ENCODE measurements at regions of chr20 and their contacts with region 1.

Region 1: GRCh38 chr20:38221119-38221589 is 39.4 kb downstream of the KIAA1755 start:
- DNase-seq: peak; percentile 70
- ATAC-seq: peak; percentile 87
- H3K4me3 ChIP-seq: no peak overlapping the region
- H3K27ac ChIP-seq: no peak overlapping the region
- H3K4me1 ChIP-seq: peaks cover 18% of the 10 kb centered on the region; the same call in 1 of the 2 replicates
- H3K27me3 ChIP-seq: peaks cover 5 to 46% of the 10 kb centered on the region in 2 experiments; a peak in 4 of 5 replicates
- CTCF ChIP-seq: peak; percentile 100
- EP300 ChIP-seq: no peak
- POLR2A ChIP-seq: no peak
- RAD21 ChIP-seq: peak; percentile 98

Region 2: GRCh38 chr20:37941332-37941731 is 279.8 kb before region 1 on chr20:
- CTCF ChIA-PET with region 1: interaction called, 4 read pairs
- POLR2A ChIA-PET with region 1: no interaction called
- in situ Hi-C with region 1: no loop called
- intact Hi-C with region 1: loop called (anchors 5 kb)
- DNase-seq: peak; percentile 69
- ATAC-seq: peak; percentile 87
- H3K4me3 ChIP-seq: no peak overlapping the region
- H3K27ac ChIP-seq: no peak overlapping the region
- H3K4me1 ChIP-seq: peaks cover 16% of the 10 kb centered on the region
- H3K27me3 ChIP-seq: peaks cover 8 to 9% of the 10 kb centered on the region in 2 experiments; a peak in 3 of 5 replicates
- CTCF ChIP-seq: peak; percentile 81
- EP300 ChIP-seq: no peak
- POLR2A ChIP-seq: no peak
- RAD21 ChIP-seq: peak; percentile 84

Region 3: DNA sequence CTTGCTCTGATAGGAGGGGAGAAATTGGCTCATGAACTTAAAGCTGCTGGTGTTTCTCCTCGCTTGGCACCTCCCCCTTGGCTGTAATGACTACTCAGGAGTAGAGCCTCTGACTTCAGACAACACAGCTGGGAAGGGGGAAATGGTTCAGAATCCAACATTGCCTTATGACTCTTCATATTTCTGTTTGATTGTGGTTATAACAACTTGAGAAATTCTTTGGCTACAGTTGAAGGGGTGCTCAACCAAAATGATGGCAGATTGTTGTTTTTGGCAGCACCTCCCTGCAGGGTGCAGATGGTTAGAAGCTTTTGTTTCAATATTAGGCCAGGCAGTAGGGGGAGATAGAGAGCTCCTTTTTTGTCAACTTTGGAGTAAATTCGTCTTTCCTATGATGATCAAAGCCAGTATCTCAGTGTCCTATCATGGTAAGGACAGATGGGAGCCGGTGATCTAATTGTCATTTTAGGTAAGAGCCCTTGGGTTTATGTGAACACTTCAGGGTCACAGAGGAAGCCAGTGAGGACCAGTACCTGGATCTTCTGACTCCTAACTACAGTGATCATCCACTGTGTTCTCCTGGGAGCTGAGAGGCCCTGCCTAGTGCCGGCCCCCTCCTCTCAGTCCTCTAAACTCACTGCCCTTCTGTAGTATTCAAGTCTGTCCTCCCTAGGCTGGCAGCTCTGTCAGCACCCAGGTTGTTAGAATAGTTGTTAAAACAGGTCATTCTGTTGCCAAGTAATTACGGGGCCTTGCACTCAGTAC is 147.7 kb before region 1 on chr20:
- CTCF ChIA-PET with region 1: interaction called, 76 read pairs
- POLR2A ChIA-PET with region 1: interaction called, 7 read pairs
- in situ Hi-C with region 1: no loop called
- intact Hi-C with region 1: loop called (anchors 1 kb)
- DNase-seq: peak; percentile 76
- ATAC-seq: peak; percentile 82
- H3K4me3 ChIP-seq: no peak overlapping the region
- H3K27ac ChIP-seq: no peak overlapping the region
- H3K4me1 ChIP-seq: peaks cover 37% of the 10 kb centered on the region
- H3K27me3 ChIP-seq: no peaks in the 10 kb centered on the region
- CTCF ChIP-seq: peak; percentile 84
- EP300 ChIP-seq: no peak
- POLR2A ChIP-seq: no peak
- RAD21 ChIP-seq: peak; percentile 79

Region 4: DNA sequence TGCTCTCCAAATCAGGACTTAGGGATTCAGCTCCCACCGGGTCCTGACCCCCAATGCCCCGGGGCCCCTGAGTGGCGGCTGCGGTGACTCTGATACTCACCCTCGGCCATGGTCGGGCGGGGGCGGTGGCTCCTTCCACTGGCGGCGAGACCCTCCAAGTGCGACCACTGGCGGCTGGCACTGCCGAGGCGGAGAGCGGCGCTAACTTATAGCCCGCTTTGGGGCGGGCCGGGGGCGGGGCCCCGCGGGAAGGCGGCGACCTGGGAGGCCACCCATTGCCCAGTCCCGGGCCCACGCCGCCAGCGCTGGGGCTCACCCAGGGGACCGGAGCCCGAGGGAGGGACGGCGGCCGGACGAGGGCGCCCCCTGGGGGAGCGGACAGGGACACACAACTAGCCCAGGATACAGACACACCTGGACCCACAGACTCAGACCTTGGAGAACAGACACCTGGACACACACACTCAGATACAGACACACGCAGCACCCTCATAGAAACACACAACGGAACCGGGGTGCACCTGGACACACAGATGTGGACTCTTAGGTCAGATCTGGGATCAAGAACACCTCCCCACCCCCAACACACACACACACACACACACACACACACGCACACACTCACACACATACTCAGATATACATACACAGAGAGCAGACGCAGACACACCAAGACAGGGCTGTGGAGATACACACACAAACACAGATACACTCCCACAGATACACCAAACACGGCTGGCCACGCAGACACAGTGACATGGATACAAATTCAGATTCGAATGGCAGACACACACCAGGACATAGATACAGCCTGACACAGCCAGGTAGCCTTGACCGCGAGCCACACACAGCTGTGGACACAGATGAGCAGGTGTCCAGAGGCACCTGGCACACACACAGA is 55.8 kb before region 1 on chr20 and contains the start of gene TGM2:
- CTCF ChIA-PET with region 1: interaction called, 6 read pairs
- POLR2A ChIA-PET with region 1: no interaction called
- in situ Hi-C with region 1: no loop called
- intact Hi-C with region 1: loop called (anchors 1 kb)
- DNase-seq: peak; percentile 87
- ATAC-seq: peak; percentile 90
- H3K4me3 ChIP-seq: peak within 1 kb of the TSS; percentile 57 to 82 (median 65)
- H3K27ac ChIP-seq: no peak within 1 kb of the TSS
- H3K4me1 ChIP-seq: peaks cover 87% of the 10 kb centered on the region
- H3K27me3 ChIP-seq: no peaks in the 10 kb centered on the region
- CTCF ChIP-seq: peak; percentile 95
- EP300 ChIP-seq: peak in 1 of 2 experiments; percentile 57; a peak in 2 of 4 replicates
- POLR2A ChIP-seq: peak in 1 of 2 experiments; percentile 74; a peak in 1 of 4 replicates
- RAD21 ChIP-seq: peak; percentile 100
- total RNA-seq, gene TGM2: 4.2 and 4.5 TPM in 2 replicates